ENCODE measurements at regions of chr10 and their contacts with region 1.

Region 1: DNA sequence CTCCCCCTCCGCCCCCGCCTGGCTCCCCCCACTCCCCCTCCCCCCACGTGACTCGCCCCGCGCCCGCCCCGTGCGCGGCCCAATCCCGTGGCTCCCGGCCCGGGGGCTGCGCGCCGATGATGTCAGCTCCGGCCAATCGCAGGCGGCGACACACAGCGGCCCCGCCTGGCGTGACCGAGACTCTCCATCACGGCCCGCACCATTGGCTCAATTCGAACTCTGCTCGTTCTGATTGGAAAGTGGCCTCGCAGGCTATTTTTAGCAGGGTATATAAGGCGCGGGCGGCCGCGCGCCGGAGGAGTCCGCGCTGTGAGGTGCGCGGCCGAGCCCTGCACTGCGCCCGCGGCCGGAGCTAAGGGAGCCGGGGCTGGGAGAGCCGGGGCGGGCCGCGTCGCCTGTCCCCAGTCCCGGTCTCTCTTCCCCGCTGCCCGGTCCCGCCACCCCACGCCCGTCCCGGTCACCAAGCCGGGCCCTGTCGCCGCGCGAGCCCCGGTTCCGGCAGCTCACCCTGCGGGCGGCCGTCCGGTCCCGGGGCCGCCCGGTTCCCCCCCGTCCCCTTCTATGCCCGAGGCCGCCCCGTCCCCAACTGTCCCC is 345 bp upstream of the KLF6 start:
- DNase-seq: peak; percentile 98
- ATAC-seq: peak; percentile 71
- H3K4me3 Mint-ChIP-seq: peak overlapping the region; percentile 91
- H3K27ac Mint-ChIP-seq: peak overlapping the region; percentile 98
- H3K4me1 Mint-ChIP-seq: peaks cover 33% of the 10 kb centered on the region
- H3K27me3 Mint-ChIP-seq: no peaks in the 10 kb centered on the region
- CTCF ChIP-seq: no peak

Region 2: GRCh38 chr10:3472287-3473051 is 312.9 kb before region 1 on chr10:
- CTCF ChIA-PET with region 1: no interaction called
- POLR2A ChIA-PET with region 1: interaction called, 15 read pairs
- intact Hi-C with region 1: no loop called
- DNase-seq: no peak
- ATAC-seq: peak; percentile 42
- H3K4me3 Mint-ChIP-seq: peak overlapping the region; percentile 83
- H3K27ac Mint-ChIP-seq: peak overlapping the region; percentile 86
- H3K4me1 Mint-ChIP-seq: peaks cover 19% of the 10 kb centered on the region
- H3K27me3 Mint-ChIP-seq: no peaks in the 10 kb centered on the region
- CTCF ChIP-seq: no peak

Region 3: GRCh38 chr10:3757638-3758490 is 27.5 kb before region 1 on chr10:
- CTCF ChIA-PET with region 1: interaction called, 8 read pairs
- POLR2A ChIA-PET with region 1: interaction called, 191 read pairs
- intact Hi-C with region 1: loop called (anchors 1 kb)
- DNase-seq: no peak
- ATAC-seq: peak; percentile 60
- H3K4me3 Mint-ChIP-seq: peak overlapping the region; percentile 78
- H3K27ac Mint-ChIP-seq: peak overlapping the region; percentile 99
- H3K4me1 Mint-ChIP-seq: peaks cover 76% of the 10 kb centered on the region
- H3K27me3 Mint-ChIP-seq: no peaks in the 10 kb centered on the region
- CTCF ChIP-seq: no peak

Region 4: GRCh38 chr10:3835770-3836169 is 50.4 kb after region 1 on chr10:
- CTCF ChIA-PET with region 1: interaction called, 4 read pairs
- POLR2A ChIA-PET with region 1: interaction called, 68 read pairs
- intact Hi-C with region 1: no loop called
- DNase-seq: no peak
- ATAC-seq: peak; percentile 50
- H3K4me3 Mint-ChIP-seq: no peak overlapping the region
- H3K27ac Mint-ChIP-seq: peak overlapping the region; percentile 12
- H3K4me1 Mint-ChIP-seq: peaks cover 23% of the 10 kb centered on the region
- H3K27me3 Mint-ChIP-seq: no peaks in the 10 kb centered on the region
- CTCF ChIP-seq: no peak

Region 5: DNA sequence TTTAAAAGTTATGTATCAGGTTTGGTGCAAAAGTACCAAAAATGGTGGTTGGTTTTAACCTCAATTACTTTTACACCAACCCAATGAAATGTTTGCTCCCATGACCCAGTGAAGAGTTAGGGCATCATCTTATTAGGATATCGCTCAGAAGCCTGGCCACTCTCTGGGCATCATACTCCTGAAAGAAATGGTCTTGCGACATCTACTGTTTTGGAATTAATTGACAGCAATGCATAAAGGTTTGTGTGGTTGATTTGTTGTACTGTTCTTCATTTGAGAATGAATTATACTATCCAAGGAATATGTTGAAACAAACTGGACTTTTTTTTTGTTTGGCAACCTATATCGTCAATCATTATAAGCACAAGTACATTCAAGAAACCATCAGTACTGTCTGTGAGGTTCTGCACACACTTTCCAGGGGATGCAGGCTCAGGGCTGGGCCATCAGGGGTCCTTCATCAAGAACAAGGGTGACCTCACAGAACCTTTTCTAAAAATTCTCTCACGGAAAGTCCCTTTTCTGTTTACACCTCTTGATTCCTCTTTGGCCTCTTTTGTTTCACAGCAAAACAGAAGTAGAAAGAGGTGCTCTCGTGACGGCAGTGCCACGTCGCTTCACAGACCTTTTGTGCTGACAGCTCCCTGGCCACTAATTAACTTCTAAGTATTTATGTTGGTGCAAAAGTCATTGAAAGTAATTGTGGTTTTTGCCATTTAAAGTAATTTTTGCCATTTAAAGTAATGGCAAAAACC is 116.9 kb after region 1 on chr10:
- CTCF ChIA-PET with region 1: no interaction called
- POLR2A ChIA-PET with region 1: interaction called, 58 read pairs
- intact Hi-C with region 1: loop called (anchors 1 kb)
- DNase-seq: peak; percentile 30
- ATAC-seq: peak; percentile 87
- H3K4me3 Mint-ChIP-seq: peak overlapping the region; percentile 58
- H3K27ac Mint-ChIP-seq: peak overlapping the region; percentile 87
- H3K4me1 Mint-ChIP-seq: peaks cover 54% of the 10 kb centered on the region
- H3K27me3 Mint-ChIP-seq: no peaks in the 10 kb centered on the region
- CTCF ChIP-seq: no peak

Region 6: DNA sequence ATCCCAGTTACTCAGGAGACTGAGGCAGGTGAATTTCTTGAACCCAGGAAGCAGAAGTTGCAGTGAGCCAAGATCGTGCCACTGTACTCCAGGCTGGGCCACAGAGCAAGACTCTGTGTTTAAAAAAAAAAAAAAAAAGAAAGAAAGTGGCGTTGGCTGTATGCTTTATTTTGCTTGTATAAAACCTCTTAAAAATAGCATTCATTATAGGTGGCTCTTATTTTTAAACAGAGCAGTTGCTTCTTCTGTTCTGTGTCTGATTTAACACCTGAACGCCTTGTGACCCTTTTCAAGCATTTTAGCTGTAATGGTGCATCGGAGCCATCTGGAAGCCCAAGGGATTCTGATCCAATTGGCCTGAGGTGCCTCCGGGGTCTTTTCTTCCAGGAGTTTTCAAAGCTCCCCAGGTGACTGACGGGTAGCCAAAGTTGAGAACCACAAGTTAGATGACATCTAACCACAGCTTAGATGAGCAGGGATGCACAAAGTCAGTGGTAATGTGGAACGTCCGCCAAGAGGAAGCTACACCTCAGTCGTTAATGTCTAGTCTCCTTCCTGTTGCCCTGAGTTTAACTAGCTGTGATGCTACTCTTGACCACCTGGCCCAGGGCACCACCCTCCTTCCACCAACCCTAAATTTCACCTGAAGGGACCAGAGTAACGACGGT is 274.3 kb after region 1 on chr10:
- CTCF ChIA-PET with region 1: no interaction called
- POLR2A ChIA-PET with region 1: interaction called, 16 read pairs
- intact Hi-C with region 1: no loop called
- DNase-seq: no peak
- ATAC-seq: peak; percentile 52
- H3K4me3 Mint-ChIP-seq: no peak overlapping the region
- H3K27ac Mint-ChIP-seq: no peak overlapping the region
- H3K4me1 Mint-ChIP-seq: peaks cover 21% of the 10 kb centered on the region
- H3K27me3 Mint-ChIP-seq: no peaks in the 10 kb centered on the region
- CTCF ChIP-seq: no peak

Region 7: DNA sequence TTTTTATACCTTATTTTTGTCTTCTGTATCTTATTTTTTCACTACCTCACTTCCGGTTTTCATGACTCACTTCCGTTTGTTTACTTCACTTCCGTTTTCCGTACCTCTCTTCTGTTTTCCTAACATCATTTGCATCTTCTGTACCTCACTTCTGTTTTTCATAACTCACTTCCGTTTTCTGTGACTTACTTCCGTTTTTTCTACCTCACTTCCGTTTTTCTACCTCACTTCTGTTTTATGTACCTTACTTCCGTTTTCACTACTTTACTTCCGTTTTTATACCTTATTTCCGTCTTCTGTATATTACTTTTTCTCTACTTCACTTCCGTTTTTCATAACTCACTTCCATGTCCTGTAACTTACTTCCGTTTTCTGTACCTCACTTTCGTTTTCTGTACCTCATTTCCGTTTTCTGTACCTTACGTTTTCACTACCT is 548.1 kb after region 1 on chr10:
- CTCF ChIA-PET with region 1: no interaction called
- POLR2A ChIA-PET with region 1: interaction called, 7 read pairs
- intact Hi-C with region 1: loop called (anchors 1 kb)
- DNase-seq: no peak
- ATAC-seq: peak; percentile 28
- H3K4me3 Mint-ChIP-seq: no peak overlapping the region
- H3K27ac Mint-ChIP-seq: no peak overlapping the region
- H3K4me1 Mint-ChIP-seq: no peaks in the 10 kb centered on the region
- H3K27me3 Mint-ChIP-seq: no peaks in the 10 kb centered on the region
- CTCF ChIP-seq: no peak

Measured in activated B cell treated with CpG ODN at 0.5 μM for 24 hours (primary cell).